BJ (cell line): ENCODE measurements at regions of chr19 and their contacts with region 1.

Region 1: GRCh38 chr19:11422163-11423021 is 3.3 kb upstream of the RGL3 start:
- DNase-seq: peak; percentile 17
- H3K4me3 ChIP-seq: peak overlapping the region; percentile 9; the same call in 1 of the 2 replicates
- H3K27me3 ChIP-seq: peaks cover 1% of the 10 kb centered on the region; the same call in 1 of the 2 replicates
- CTCF ChIP-seq: no peak

Region 2: DNA sequence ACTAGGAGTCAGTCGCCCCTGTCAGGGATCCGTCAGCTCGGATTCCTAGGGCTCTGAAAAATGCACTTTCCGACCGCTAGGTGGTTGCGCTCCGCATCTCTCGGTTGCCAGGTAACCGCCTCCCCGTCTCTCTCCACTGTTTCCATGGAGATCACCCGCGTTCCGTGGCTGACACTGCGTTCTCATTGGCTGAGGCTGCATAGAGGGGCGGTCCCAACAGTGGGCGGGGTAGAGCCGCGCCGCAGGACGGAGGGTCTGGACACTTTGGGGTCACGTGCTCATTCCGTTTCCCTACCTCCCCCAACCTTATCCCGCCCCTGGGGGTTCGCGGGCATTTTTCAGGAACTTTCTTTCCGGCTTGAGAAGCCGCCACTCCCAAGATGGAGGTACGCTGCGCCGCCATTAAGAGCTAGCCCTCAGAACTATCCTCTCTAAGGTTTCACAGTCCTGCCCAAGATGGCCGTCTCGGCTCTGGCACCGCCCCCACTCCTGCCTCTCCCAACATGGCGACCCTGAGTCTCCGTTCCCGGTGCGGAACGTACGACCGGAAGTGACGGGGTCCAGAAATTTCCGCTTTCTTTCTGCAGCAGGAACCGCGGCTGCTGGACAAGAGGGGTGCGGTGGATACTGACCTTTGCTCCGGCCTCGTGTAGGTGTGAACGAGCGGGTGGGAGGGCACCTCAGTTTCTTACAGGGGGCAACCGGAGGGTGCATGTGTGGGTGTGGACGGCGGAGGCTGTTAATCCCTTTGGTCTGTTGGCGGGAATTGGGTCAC is 12.9 kb after region 1 on chr19 and contains the starts of genes ODAD3 and PRKCSH:
- CTCF ChIA-PET with region 1: interaction called, 34 read pairs
- POLR2A ChIA-PET with region 1: no interaction called
- DNase-seq: peak; percentile 100
- H3K4me3 ChIP-seq: peak within 1 kb of the TSS; percentile 76
- H3K27me3 ChIP-seq: no peaks in the 10 kb centered on the region
- CTCF ChIP-seq: peak; percentile 88
- polyA plus RNA-seq, gene ODAD3: 0.16 and 0.38 TPM in 2 replicates
- polyA plus RNA-seq, gene PRKCSH: 137 and 348 TPM in 2 replicates

Region 3: GRCh38 chr19:11694533-11695439 is 272.4 kb after region 1 on chr19:
- CTCF ChIA-PET with region 1: no interaction called
- POLR2A ChIA-PET with region 1: no interaction called
- DNase-seq: peak; percentile 71
- H3K4me3 ChIP-seq: peak overlapping the region; percentile 60
- H3K27me3 ChIP-seq: no peaks in the 10 kb centered on the region; the same call in 1 of the 2 replicates
- CTCF ChIP-seq: no peak